A549 (cell line): ENCODE measurements at regions of chr7 and their contacts with region 1.

Region 1: DNA sequence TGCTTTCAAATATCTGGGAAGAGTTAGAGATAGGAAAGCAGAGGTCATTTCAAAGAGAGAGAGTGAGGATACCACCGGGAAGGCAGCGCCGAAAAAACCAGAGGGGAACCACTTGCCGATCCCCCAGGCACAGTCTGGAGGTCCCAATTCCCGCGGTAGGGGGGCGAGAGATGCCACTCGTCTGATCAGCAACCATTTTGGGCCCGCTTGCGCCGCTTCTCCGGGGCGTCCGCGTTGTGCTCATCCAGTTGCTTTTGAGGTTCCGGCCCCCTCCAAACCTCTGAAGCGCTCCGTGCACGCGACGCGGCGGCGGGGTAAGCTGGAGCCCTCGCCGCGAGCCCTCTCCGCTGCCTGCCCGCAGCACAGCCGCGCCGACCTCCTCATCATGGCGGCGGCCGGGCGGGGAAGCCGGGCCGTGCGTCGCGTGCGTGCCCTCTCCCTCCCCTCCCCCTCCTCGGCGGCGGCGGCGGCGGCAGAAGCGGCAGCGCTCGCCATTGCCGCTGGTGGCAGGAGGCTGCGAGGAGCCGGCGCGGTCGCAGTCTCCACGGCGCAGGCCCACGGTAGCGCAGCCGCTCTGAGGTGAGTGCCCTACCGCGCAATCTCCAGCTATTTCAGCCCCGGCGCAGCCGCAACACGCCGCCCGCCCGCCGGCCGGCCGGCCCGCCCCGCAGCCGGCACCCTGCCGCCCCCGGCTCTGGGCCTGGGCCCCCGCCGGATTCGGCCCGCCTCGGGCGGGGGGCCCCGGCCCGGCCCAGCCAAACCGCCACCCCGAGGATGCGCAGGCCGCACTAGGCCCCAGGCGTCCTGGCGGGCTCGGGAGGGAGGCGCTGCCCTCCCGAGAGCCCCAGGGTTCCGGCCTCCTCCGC is at the start of gene NRF1:
- DNase-seq: peak; percentile 82 to 91
- ATAC-seq: peak; percentile 95
- H3K4me3 ChIP-seq: peak within 1 kb of the TSS; percentile 87
- H3K27ac ChIP-seq: peak within 1 kb of the TSS; percentile 94 to 95
- H3K4me1 ChIP-seq: peaks cover 39% of the 10 kb centered on the region
- CTCF ChIP-seq: no peak
- EP300 ChIP-seq: no peak
- POLR2A ChIP-seq: peak; percentile 92
- RAD21 ChIP-seq: no peak; a peak in 3 of 5 replicates
- polyA plus RNA-seq, gene NRF1: 18.5 and 26.6 TPM in 2 replicates

Region 2: GRCh38 chr7:129224251-129225205 is 387.0 kb before region 1 on chr7 and contains the start of gene AHCYL2:
- CTCF ChIA-PET with region 1: no interaction called
- POLR2A ChIA-PET with region 1: no interaction called
- DNase-seq: peak; percentile 92 to 98
- ATAC-seq: peak; percentile 95 to 96
- H3K4me3 ChIP-seq: peak within 1 kb of the TSS; percentile 97
- H3K27ac ChIP-seq: peak within 1 kb of the TSS; percentile 77 to 94
- H3K4me1 ChIP-seq: peaks cover 20% of the 10 kb centered on the region; the same call in 2 of the 3 replicates
- CTCF ChIP-seq: no peak
- EP300 ChIP-seq: no peak
- POLR2A ChIP-seq: peak; percentile 76
- RAD21 ChIP-seq: no peak
- polyA plus RNA-seq, gene AHCYL2: 25.7 and 25.9 TPM in 2 replicates

Region 3: GRCh38 chr7:129351320-129351719 is 260.2 kb before region 1 on chr7:
- CTCF ChIA-PET with region 1: no interaction called
- POLR2A ChIA-PET with region 1: no interaction called
- DNase-seq: no peak
- ATAC-seq: no peak
- H3K4me3 ChIP-seq: no peak overlapping the region
- H3K27ac ChIP-seq: no peak overlapping the region
- H3K4me1 ChIP-seq: no peaks in the 10 kb centered on the region
- CTCF ChIP-seq: no peak
- EP300 ChIP-seq: no peak
- POLR2A ChIP-seq: no peak
- RAD21 ChIP-seq: no peak

Region 4: DNA sequence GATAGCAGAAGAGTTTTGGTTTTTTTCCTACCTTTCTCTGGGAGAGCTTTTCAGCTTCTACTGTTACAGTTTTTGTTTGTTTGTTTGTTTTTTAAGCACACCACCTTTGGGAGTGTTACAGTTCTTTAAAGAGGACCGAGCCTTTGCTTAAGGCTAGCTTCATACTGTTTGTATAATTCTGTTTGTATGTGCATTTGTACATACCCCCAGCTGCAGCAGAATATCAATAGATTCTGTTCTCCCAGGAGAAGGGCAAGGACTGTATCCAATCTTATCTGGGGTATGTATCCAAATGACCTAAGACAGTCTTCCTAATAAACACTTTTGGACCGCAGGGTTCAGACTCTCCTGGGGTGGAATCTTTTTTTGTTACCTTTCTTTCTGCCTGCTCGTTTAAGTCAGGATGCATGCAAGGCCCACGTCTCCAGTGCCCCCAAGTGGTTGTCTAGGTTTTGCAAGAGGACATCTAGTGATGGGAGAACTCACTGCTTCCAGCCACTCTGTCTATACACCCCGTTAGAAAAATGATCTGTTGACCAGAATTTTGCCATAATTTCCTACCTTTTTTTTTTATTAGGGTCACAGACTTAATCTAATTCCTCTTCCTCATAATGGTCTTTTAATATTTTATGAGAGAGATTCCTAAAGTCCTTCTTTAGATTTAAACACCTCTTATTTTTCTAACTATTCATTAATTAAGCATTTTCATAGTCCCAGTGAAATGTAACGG is 24.0 kb after region 1 on chr7:
- CTCF ChIA-PET with region 1: interaction called, 11 read pairs
- POLR2A ChIA-PET with region 1: interaction called, 3 read pairs
- DNase-seq: peak; percentile 79 to 81
- ATAC-seq: peak; percentile 99 to 100
- H3K4me3 ChIP-seq: no peak overlapping the region
- H3K27ac ChIP-seq: no peak overlapping the region
- H3K4me1 ChIP-seq: peaks cover 11% of the 10 kb centered on the region; the same call in 2 of the 3 replicates
- CTCF ChIP-seq: peak; percentile 88
- EP300 ChIP-seq: no peak
- POLR2A ChIP-seq: no peak
- RAD21 ChIP-seq: peak; percentile 78 to 83

Region 5: GRCh38 chr7:129644634-129645230 is 33.3 kb after region 1 on chr7:
- CTCF ChIA-PET with region 1: interaction called, 21 read pairs
- POLR2A ChIA-PET with region 1: interaction called, 3 read pairs
- DNase-seq: peak in 1 of 2 experiments; percentile 55
- ATAC-seq: peak in 1 of 2 experiments; percentile 67; a peak in 3 of 6 replicates
- H3K4me3 ChIP-seq: no peak overlapping the region
- H3K27ac ChIP-seq: no peak overlapping the region
- H3K4me1 ChIP-seq: peaks cover 28% of the 10 kb centered on the region; the same call in 2 of the 3 replicates
- CTCF ChIP-seq: peak; percentile 79
- EP300 ChIP-seq: no peak
- POLR2A ChIP-seq: no peak
- RAD21 ChIP-seq: peak; percentile 81

Region 6: DNA sequence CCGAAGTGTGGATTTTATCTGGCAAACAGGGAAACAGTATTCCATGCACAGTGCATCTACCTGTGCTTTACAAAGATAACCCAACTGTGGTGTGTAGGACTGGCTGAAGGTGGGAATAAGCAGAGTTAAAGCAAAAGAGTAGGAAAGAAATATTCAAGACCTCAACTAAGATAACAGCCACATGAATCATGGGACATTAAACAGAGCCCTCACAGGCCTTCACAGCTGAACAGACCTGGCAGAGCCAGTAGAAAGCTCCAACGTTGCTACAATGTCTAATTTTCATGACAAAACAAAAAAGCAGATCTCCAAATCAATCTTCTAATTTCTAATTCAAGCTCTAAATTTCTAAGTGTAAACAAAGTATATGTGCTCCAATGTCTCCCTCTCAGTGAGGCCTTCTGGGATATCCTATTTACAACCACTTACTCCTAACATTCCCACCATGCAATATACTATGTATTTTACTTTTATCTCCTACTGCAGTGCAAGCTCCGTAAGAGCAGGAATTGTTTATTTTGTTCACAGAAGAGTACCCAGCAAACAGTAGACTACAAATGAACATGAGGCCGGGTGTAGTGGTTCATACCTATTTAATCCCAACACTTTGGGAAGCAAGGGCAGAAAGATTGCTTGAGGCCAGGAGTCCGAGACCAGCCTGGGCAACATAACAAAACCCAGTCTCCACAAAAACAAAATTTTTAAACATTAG is 277.8 kb after region 1 on chr7:
- CTCF ChIA-PET with region 1: no interaction called
- POLR2A ChIA-PET with region 1: no interaction called
- DNase-seq: no peak
- ATAC-seq: no peak; a peak in 1 of 6 replicates
- H3K4me3 ChIP-seq: no peak overlapping the region
- H3K27ac ChIP-seq: no peak overlapping the region
- H3K4me1 ChIP-seq: peaks cover 23% of the 10 kb centered on the region
- CTCF ChIP-seq: no peak
- EP300 ChIP-seq: no peak
- POLR2A ChIP-seq: no peak
- RAD21 ChIP-seq: no peak

Region 7: GRCh38 chr7:129958643-129959470 is 347.4 kb after region 1 on chr7:
- CTCF ChIA-PET with region 1: no interaction called
- POLR2A ChIA-PET with region 1: interaction called, 10 read pairs
- DNase-seq: peak; percentile 90 to 92
- ATAC-seq: peak; percentile 97 to 99
- H3K4me3 ChIP-seq: no peak overlapping the region
- H3K27ac ChIP-seq: peak overlapping the region; percentile 87 to 88
- H3K4me1 ChIP-seq: peaks cover 34% of the 10 kb centered on the region
- CTCF ChIP-seq: no peak
- EP300 ChIP-seq: peak in 1 of 2 experiments; percentile 54; a peak in 1 of 5 replicates
- POLR2A ChIP-seq: no peak
- RAD21 ChIP-seq: peak in 1 of 2 experiments; percentile 39; a peak in 2 of 5 replicates